Psoas muscle (tissue), 8 donors: ENCODE measurements at regions of chr4 and their contacts with region 1.

Region 1: GRCh38 chr4:3352941-3353594 is 60.2 kb downstream of the RGS12 start:
- DNase-seq: no peak
- ATAC-seq: peak in 1 of 4 donors; percentile 17
- H3K4me3 ChIP-seq: no peak overlapping the region
- H3K27ac ChIP-seq: no peak overlapping the region
- H3K4me1 ChIP-seq: no peaks in the 10 kb centered on the region
- H3K27me3 ChIP-seq: no peaks in the 10 kb centered on the region
- CTCF ChIP-seq: no peak

Region 2: GRCh38 chr4:3160438-3160837 is 192.6 kb before region 1 on chr4:
- intact Hi-C with region 1: no loop called
- DNase-seq: no peak
- ATAC-seq: no peak
- H3K4me3 ChIP-seq: no peak overlapping the region
- H3K27ac ChIP-seq: no peak overlapping the region
- H3K4me1 ChIP-seq: no peaks in the 10 kb centered on the region
- H3K27me3 ChIP-seq: no peaks in the 10 kb centered on the region
- CTCF ChIP-seq: no peak

Region 3: DNA sequence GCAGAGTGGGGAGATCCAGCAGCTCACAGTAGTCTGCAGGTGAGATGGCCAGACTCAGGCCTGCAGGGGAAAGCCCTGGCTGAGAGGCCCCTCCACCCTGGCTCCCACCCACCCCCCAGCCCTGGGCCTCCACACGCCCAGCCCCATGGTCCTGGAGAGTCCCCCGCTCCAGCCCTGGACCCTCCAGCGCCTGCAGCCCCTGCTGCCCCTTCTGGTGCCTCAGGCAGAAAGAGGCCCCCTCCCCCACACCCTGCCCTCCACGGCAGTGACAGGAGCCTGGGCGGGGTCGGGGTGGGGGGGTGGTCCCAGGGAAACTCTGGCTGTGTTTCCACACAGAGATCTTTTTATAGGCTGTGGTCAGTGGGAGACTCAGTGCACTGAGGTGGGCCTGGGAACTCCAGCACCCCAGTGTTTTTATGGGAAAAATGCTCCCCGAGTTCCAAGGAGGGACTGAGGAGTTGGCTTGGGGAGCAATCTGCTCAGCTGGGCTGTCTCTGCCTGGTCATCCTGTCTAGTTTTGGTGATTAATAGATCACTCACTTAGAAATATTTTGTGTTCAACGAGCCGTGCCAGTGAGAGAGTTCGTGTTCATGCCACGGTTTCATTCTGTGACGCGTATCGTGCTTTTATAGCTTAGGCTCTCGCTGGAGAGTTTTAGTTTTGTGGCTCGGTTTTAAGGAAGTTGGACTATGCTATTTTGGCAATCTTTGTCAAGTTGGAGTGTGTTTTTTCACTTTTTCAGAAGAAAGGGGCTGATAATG is 35.6 kb after region 1 on chr4:
- intact Hi-C with region 1: loop called in 1 of 2 experiments (anchors 5 kb)
- DNase-seq: no peak
- ATAC-seq: peak; percentile 4 to 79 (median 54)
- H3K4me3 ChIP-seq: peak overlapping the region; percentile 41
- H3K27ac ChIP-seq: peak overlapping the region; percentile 50
- H3K4me1 ChIP-seq: peaks cover 23% of the 10 kb centered on the region
- H3K27me3 ChIP-seq: no peaks in the 10 kb centered on the region
- CTCF ChIP-seq: no peak